Transverse colon (tissue), 4 donors: ENCODE measurements at regions of chrX and their contacts with region 1.

Region 1: DNA sequence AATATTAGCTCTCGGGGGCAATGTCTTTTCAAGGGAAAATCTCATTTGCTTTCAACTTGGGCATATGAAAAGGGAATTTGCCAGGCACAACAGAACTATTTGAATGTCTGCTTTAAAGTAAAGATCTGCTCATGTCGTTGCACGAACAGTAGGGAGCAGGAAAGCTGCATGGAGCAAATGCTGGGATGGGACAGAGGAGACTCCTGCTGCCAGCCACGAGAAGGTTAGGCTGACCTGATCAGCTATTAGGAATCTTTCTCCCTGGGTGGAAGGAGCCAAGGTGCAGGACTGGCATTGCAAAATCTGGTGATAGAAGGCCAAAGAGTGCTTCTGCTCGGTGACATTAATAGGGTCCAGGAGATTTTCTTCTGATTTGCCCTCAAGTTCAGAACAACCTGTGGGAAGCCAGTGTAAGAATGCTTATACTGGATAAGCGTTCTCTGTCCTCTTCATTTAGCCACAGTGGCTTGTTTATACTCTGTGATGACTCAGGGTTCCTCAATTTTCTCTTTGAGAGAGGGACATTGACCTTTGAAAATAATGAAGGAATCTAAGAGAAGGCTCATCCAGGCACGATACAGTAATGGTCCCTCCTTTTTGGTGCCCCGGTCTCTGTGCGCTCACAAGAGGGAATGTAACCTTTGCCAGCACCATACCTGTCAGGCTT is 22.9 kb downstream of the FHL1 start:
- DNase-seq: no peak
- H3K4me3 ChIP-seq: no peak overlapping the region
- H3K27ac ChIP-seq: peak overlapping the region; percentile 69 to 85 (median 79)
- H3K4me1 ChIP-seq: peaks cover 0 to 17% (median 3%) of the 10 kb centered on the region in 4 donors
- H3K27me3 ChIP-seq: no peaks in the 10 kb centered on the region
- CTCF ChIP-seq: no peak
- EP300 ChIP-seq: no peak
- POLR2A ChIP-seq: no peak

Region 2: GRCh38 chrX:136143711-136144110 is 26.6 kb before region 1 on chrX:
- in situ Hi-C with region 1: no loop called
- intact Hi-C with region 1: no loop called
- DNase-seq: no peak
- H3K4me3 ChIP-seq: no peak overlapping the region
- H3K27ac ChIP-seq: no peak overlapping the region
- H3K4me1 ChIP-seq: peaks cover 0 to 5% (median 2%) of the 10 kb centered on the region in 4 donors
- H3K27me3 ChIP-seq: no peaks in the 10 kb centered on the region
- CTCF ChIP-seq: no peak
- EP300 ChIP-seq: no peak
- POLR2A ChIP-seq: no peak

Region 3: DNA sequence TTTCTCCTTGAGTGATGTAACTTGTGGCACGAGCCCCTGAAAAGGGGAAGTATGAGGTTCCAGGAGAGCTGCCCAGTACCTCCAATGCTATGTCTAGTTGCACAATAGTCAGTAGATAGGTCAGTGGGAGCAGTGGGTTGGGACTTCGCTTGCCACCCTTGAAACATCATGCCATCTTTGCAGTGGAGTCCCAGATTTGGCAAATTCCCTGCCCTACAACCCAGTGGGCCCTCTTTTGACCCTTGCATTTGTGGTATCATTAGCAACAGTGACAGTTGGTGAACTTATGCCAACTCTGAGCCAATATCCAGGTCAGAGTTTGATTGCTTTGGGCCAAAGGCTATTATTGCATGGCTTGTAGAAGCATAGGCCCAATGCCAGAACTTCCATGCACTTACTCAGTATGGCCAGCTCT is 10.6 kb before region 1 on chrX:
- in situ Hi-C with region 1: no loop called
- intact Hi-C with region 1: no loop called
- DNase-seq: no peak
- H3K4me3 ChIP-seq: no peak overlapping the region
- H3K27ac ChIP-seq: peak overlapping the region; percentile 65 to 94 (median 77)
- H3K4me1 ChIP-seq: peaks cover 0 to 35% (median 6%) of the 10 kb centered on the region in 4 donors
- H3K27me3 ChIP-seq: no peaks in the 10 kb centered on the region
- CTCF ChIP-seq: no peak
- EP300 ChIP-seq: no peak
- POLR2A ChIP-seq: no peak

Region 4: DNA sequence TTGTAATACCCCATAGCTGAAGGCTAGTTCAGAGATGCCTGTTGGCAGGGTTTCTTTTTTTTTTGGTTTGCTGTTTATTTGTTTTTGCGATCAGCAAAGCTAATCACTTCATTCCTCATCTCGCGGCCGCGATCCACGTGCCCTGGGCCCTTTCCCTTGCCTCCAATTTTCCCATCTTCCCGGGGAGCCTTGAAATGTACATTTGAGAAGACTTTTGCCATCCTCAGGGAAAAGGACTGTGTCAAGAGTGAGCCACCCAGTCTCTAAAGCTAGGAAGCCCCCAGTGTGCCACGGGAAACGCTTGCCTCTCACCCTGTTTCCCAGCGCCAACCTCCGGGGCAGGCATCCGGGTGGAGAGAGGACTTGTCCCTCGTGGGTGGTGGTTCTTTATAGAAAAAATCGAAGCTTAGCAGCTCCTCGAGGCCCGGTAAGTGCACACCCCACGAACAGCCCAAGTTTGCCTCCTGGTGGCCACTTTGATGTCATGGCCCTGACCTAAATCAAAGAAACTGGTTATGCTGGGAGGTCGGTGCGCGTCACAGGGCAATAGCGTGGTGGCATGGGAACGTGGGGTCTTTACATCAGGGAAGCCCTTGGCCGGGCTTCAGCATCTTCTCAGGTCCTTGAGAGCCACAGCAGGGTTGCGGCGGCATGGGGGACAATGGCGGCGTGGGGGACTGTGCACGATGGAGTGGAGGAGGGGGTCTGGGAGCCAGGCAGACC is 38.9 kb after region 1 on chrX:
- in situ Hi-C with region 1: no loop called
- intact Hi-C with region 1: loop called (anchors 5 kb)
- DNase-seq: peak; percentile 45
- H3K4me3 ChIP-seq: no peak overlapping the region
- H3K27ac ChIP-seq: peak overlapping the region; percentile 77 to 82 (median 80)
- H3K4me1 ChIP-seq: peaks cover 4 to 19% (median 9%) of the 10 kb centered on the region in 4 donors
- H3K27me3 ChIP-seq: no peaks in the 10 kb centered on the region
- CTCF ChIP-seq: peak; percentile 40 to 65 (median 54)
- EP300 ChIP-seq: no peak
- POLR2A ChIP-seq: no peak